Head of caudate nucleus (tissue), 42 donors: ENCODE measurements at regions of chr10 and their contacts with region 1.

Region 1: GRCh38 chr10:122298598-122299301 is 27.7 kb downstream of the BTBD16 start:
- DNase-seq: peak; percentile 40 to 92 (median 78)

Region 2: GRCh38 chr10:122342293-122343134 is 43.8 kb after region 1 on chr10:
- intact Hi-C with region 1: loop called (anchors 5 kb)
- DNase-seq: peak in 39 of 42 donors; percentile 26 to 90 (median 67)

Region 3: GRCh38 chr10:122435212-122435827 is 136.6 kb after region 1 on chr10:
- intact Hi-C with region 1: loop called (anchors 5 kb)
- DNase-seq: no peak

Region 4: GRCh38 chr10:122515588-122516231 is 217.0 kb after region 1 on chr10:
- intact Hi-C with region 1: no loop called
- DNase-seq: peak in 1 of 42 donors; percentile 25

Region 5: DNA sequence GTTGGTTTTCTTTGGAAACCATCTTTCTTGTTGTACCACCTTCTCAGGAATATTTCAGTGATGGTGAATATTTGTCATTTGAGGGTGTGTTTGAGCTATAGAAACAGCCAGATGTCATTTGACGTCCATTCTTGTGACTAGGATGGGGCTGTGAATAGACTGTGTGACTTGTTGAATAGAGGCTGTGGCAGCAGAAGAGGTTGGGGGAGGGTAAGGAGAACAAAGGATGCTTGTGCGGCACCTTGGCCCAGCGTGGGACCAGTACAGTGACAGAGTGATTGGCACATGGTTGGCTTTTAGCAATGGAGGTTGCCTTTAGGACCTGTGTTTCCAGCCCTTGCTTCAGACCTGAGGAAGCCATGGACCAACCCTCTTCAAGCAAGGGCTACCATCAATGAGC is 273.1 kb after region 1 on chr10:
- intact Hi-C with region 1: loop called (anchors 5 kb)
- DNase-seq: peak in 28 of 42 donors; percentile 3 to 81 (median 38)